Caco-2 (cell line): ENCODE measurements at regions of chr2 and their contacts with region 1.

Region 1: GRCh38 chr2:64644177-64645004 is 9.3 kb downstream of the SERTAD2 start:
- DNase-seq: peak in 1 of 2 experiments; percentile 29
- H3K4me3 ChIP-seq: peak overlapping the region; percentile 24
- H3K4me3 Mint-ChIP-seq: peak overlapping the region; percentile 70
- H3K27ac Mint-ChIP-seq: peak overlapping the region; percentile 92
- H3K4me1 ChIP-seq: peaks cover 73% of the 10 kb centered on the region
- H3K4me1 Mint-ChIP-seq: peaks cover 54% of the 10 kb centered on the region
- H3K27me3 ChIP-seq: no peaks in the 10 kb centered on the region
- H3K27me3 Mint-ChIP-seq: no peaks in the 10 kb centered on the region
- CTCF ChIP-seq: no peak

Region 2: DNA sequence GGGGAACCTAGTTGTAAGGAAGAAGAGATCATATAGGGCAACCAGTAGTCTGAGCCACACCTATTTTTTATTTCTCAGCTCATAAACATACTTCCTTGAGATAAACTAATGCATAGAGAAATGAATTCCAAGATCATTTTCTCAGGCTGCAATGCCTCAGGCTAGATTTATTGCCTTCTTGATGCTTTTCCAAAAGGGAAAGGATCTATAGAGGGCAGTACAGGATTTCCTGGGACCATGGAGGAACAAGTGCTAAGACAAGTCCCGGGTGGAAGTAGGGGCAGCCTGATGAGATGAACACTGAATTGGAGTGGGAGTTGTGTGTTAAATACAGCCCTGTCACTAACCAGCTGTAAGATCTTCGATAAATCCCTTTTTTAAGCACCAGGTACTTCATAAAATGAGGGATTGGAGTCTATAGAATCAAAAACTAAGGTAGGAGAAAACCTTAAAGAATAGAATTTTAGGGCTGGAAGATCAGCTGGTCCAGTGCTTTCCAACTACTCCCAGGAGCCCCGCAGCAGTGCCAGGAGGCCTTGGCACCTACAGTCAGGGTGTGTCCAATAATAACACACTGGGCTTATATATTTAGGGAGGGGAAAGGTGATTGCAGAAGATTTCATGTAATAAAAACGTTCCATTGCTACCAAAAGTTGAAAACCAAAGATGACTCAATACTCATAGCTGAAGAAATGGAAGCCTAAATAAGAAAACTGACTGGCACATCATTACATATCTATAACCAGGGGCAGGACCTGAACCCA is 48.8 kb before region 1 on chr2:
- CTCF ChIA-PET with region 1: interaction called, 4 read pairs
- POLR2A ChIA-PET with region 1: no interaction called
- intact Hi-C with region 1: loop called (anchors 2 kb)
- DNase-seq: peak in 1 of 2 experiments; percentile 26
- H3K4me3 ChIP-seq: no peak overlapping the region
- H3K4me3 Mint-ChIP-seq: no peak overlapping the region
- H3K27ac Mint-ChIP-seq: no peak overlapping the region
- H3K4me1 ChIP-seq: no peaks in the 10 kb centered on the region
- H3K4me1 Mint-ChIP-seq: no peaks in the 10 kb centered on the region
- H3K27me3 ChIP-seq: no peaks in the 10 kb centered on the region
- H3K27me3 Mint-ChIP-seq: no peaks in the 10 kb centered on the region
- CTCF ChIP-seq: peak in 1 of 2 experiments; percentile 58

Region 3: DNA sequence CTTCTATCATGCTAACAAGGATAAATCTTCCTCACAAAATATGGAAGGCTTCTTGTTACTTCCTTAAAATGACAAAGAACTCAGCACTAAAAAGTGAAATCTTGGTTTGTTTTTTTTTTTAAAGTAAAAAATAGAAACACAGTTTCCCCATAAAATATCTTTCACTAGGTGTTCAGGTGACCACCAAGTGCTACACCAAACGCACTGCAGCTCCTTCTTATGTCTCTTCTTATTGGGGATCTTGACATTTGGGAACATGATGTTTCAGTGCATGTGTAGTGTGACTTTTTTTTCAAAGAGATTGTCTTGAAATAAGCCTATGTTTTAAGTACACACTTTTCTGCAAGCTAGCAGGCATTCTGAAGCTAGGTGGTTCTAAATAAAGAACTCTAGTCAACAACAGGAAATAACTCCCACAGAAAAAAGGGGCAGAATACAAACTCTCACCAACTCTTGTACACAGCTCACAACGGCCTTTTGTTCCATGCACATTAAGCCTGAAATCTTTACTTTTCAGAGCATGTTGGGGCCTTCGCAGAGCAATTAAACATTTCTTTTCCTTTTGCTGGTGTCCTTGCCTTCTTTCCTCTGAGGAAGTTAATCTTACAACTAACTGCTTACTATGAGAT is 22.5 kb after region 1 on chr2:
- CTCF ChIA-PET with region 1: no interaction called
- POLR2A ChIA-PET with region 1: no interaction called
- intact Hi-C with region 1: no loop called
- DNase-seq: no peak
- H3K4me3 ChIP-seq: no peak overlapping the region
- H3K4me3 Mint-ChIP-seq: no peak overlapping the region
- H3K27ac Mint-ChIP-seq: no peak overlapping the region
- H3K4me1 ChIP-seq: no peaks in the 10 kb centered on the region
- H3K4me1 Mint-ChIP-seq: no peaks in the 10 kb centered on the region
- H3K27me3 ChIP-seq: no peaks in the 10 kb centered on the region
- H3K27me3 Mint-ChIP-seq: no peaks in the 10 kb centered on the region
- CTCF ChIP-seq: no peak

Region 4: GRCh38 chr2:64750817-64751285 is 106.5 kb after region 1 on chr2:
- CTCF ChIA-PET with region 1: interaction called, 25 read pairs
- POLR2A ChIA-PET with region 1: interaction called, 24 read pairs
- intact Hi-C with region 1: loop called (anchors 1 kb)
- DNase-seq: peak; percentile 99
- H3K4me3 ChIP-seq: peak overlapping the region; percentile 73
- H3K4me3 Mint-ChIP-seq: peak overlapping the region; percentile 96
- H3K27ac Mint-ChIP-seq: peak overlapping the region; percentile 93
- H3K4me1 ChIP-seq: peaks cover 18% of the 10 kb centered on the region; the same call in 1 of the 2 replicates
- H3K4me1 Mint-ChIP-seq: peaks cover 16% of the 10 kb centered on the region
- H3K27me3 ChIP-seq: no peaks in the 10 kb centered on the region
- H3K27me3 Mint-ChIP-seq: no peaks in the 10 kb centered on the region
- CTCF ChIP-seq: no peak

Region 5: DNA sequence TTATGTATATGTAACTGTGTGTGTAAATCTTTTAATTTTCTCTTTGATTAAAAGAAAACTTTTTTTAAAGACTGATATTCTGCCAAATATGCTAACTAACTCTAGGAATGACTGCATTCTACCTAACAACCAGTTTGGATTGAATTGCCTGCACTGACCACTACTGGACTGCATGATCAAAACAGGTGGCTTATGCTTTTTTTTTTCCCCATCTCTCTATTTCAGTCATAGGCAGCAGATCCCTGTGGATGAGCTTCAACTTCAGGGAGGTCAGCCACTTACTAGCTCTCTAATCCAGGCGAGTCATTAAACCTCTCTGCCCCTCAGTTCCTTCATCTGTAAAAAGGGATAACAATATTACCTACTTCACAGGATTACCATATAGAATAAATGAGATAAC is 147.9 kb after region 1 on chr2:
- CTCF ChIA-PET with region 1: interaction called, 7 read pairs
- POLR2A ChIA-PET with region 1: no interaction called
- intact Hi-C with region 1: loop called (anchors 1 kb)
- DNase-seq: no peak
- H3K4me3 ChIP-seq: no peak overlapping the region
- H3K4me3 Mint-ChIP-seq: no peak overlapping the region
- H3K27ac Mint-ChIP-seq: no peak overlapping the region
- H3K4me1 ChIP-seq: peaks cover 13% of the 10 kb centered on the region
- H3K4me1 Mint-ChIP-seq: peaks cover 6% of the 10 kb centered on the region
- H3K27me3 ChIP-seq: no peaks in the 10 kb centered on the region
- H3K27me3 Mint-ChIP-seq: no peaks in the 10 kb centered on the region
- CTCF ChIP-seq: peak; percentile 30

Region 6: GRCh38 chr2:64831134-64831976 is 187.0 kb after region 1 on chr2:
- CTCF ChIA-PET with region 1: interaction called, 3 read pairs
- POLR2A ChIA-PET with region 1: no interaction called
- intact Hi-C with region 1: loop called (anchors 1 kb)
- DNase-seq: peak; percentile 59 to 76
- H3K4me3 ChIP-seq: no peak overlapping the region
- H3K4me3 Mint-ChIP-seq: no peak overlapping the region
- H3K27ac Mint-ChIP-seq: no peak overlapping the region
- H3K4me1 ChIP-seq: no peaks in the 10 kb centered on the region
- H3K4me1 Mint-ChIP-seq: peaks cover 12% of the 10 kb centered on the region
- H3K27me3 ChIP-seq: no peaks in the 10 kb centered on the region
- H3K27me3 Mint-ChIP-seq: no peaks in the 10 kb centered on the region
- CTCF ChIP-seq: peak; percentile 75 to 81

Region 7: GRCh38 chr2:64865073-64865830 is 220.9 kb after region 1 on chr2:
- CTCF ChIA-PET with region 1: interaction called, 5 read pairs
- POLR2A ChIA-PET with region 1: no interaction called
- intact Hi-C with region 1: loop called (anchors 1 kb)
- DNase-seq: peak in 1 of 2 experiments; percentile 70
- H3K4me3 ChIP-seq: peak overlapping the region; percentile 72
- H3K4me3 Mint-ChIP-seq: peak overlapping the region; percentile 61
- H3K27ac Mint-ChIP-seq: no peak overlapping the region
- H3K4me1 ChIP-seq: no peaks in the 10 kb centered on the region; the same call in 1 of the 2 replicates
- H3K4me1 Mint-ChIP-seq: peaks cover 7% of the 10 kb centered on the region
- H3K27me3 ChIP-seq: no peaks in the 10 kb centered on the region
- H3K27me3 Mint-ChIP-seq: peaks cover 5% of the 10 kb centered on the region
- CTCF ChIP-seq: peak; percentile 31 to 80

Region 8: DNA sequence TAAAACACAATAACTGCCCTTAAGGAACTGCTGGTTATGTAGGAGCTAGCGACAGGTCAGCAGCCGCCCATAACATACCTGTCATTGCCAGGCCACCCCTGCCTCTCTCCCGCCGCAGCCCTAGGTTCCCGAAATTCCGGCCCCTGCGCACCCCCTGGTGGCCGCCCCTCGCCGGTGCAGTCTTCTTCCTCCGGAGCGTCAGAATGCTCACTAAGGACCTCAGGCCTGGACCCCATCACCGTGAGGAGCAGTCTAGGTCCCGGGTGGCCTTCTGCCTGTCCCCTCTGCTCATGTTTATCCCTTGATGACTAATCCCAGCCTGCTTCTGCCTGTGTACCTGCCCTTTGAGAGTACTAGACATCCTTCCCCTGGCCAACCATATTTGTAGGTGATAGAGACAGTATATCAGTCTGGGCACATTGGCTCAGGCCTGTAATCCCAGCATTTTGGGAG is 229.1 kb after region 1 on chr2:
- CTCF ChIA-PET with region 1: interaction called, 3 read pairs
- POLR2A ChIA-PET with region 1: no interaction called
- intact Hi-C with region 1: loop called (anchors 2 kb)
- DNase-seq: peak; percentile 78 to 91
- H3K4me3 ChIP-seq: no peak overlapping the region
- H3K4me3 Mint-ChIP-seq: no peak overlapping the region
- H3K27ac Mint-ChIP-seq: no peak overlapping the region
- H3K4me1 ChIP-seq: peaks cover 14% of the 10 kb centered on the region; the same call in 1 of the 2 replicates
- H3K4me1 Mint-ChIP-seq: peaks cover 14% of the 10 kb centered on the region
- H3K27me3 ChIP-seq: no peaks in the 10 kb centered on the region
- H3K27me3 Mint-ChIP-seq: no peaks in the 10 kb centered on the region
- CTCF ChIP-seq: peak; percentile 91 to 96

Region 9: DNA sequence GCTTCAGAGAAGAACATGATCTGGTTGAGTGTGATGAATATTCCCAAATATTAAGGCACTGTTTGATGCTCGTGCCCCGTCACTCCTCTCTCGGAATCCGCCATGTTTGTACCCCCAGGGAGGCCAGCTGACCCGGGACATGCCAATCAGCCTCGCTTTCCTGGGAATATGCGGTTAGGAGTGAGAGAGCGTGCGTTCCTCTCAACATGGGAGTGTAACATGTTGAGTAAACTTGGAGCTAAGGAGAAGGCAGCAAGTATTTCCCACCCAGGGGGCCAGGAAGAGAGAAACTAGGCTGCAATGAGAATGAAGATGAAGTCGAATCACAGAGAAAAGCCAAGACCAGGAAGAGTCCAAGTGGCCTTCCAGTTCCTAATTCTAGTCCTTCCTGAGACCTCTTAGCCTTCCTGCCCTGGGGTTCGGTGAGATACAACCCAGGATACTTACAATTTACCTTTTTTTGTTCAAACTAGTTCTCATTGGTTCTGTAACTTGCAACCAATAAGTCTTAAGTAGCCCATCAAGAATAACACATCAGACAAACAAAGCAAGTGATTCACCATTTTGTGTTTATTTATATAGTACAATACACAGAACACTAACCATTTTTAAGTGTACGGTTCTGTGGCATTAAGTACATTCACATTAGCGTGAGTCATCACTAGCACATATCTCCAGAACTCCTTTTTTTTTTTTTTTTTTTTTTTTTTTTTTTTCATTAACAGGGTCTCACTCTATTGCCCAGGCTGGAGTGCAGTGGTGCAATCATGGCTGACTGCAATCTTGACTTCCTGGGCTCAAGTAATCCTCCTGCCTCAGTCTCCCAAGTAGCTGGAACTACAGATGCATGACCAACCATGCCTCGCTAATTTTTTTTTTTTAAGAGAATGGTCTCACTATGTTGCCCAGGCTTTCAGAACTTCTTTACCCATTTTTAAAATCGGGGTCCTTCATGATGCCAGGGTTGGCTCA is 308.4 kb after region 1 on chr2:
- CTCF ChIA-PET with region 1: no interaction called
- POLR2A ChIA-PET with region 1: no interaction called
- intact Hi-C with region 1: no loop called
- DNase-seq: no peak
- H3K4me3 ChIP-seq: no peak overlapping the region
- H3K4me3 Mint-ChIP-seq: no peak overlapping the region
- H3K27ac Mint-ChIP-seq: no peak overlapping the region
- H3K4me1 ChIP-seq: no peaks in the 10 kb centered on the region
- H3K4me1 Mint-ChIP-seq: peaks cover 6% of the 10 kb centered on the region
- H3K27me3 ChIP-seq: no peaks in the 10 kb centered on the region; the same call in 1 of the 2 replicates
- H3K27me3 Mint-ChIP-seq: no peaks in the 10 kb centered on the region
- CTCF ChIP-seq: no peak